Breast epithelium (tissue), 4 donors: ENCODE measurements at regions of chr19 and their contacts with region 1.

Region 1: DNA sequence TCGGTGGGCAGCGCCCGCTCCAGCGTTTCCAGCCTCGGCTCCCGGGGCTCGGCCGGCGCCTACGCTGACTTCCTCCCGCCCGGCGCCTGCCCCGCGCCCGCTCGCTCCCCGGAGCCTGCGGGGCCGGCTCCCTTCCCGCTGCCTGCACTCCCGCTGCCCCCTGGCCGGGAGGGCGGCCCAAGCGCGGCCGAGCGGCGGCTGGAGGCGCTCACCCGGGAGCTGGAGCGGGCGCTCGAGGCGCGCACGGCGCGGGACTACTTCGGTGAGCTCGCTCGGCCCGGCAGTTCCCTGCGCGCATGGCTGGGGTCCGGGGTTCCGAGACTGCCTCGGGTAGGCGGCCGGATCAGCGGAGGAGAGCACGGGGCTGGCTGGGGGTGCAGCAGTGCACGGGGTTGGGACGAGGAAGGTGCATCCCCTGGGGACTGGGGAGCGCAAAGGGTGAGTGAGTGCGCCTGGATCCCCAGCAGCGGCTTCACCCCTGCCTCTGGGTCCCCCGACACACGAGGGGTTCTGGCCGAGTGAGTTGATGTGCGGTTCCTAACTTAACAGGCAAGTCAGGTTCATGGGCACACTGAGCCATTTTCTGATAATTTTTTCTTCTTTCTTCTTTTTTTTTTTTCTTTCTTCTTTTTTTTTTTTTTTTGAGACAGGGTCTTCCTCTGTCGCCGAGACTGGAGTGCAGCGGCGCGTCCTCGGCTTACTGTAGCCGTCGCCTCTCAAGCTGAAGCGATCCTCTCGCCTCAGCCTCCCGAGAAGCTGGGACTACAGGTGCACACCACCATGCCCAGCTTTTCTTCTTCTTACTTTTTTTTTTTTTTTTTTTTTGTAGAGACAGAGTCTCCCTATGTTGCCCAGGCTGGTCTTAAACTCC is 1.1 kb downstream of the WTIP start:
- DNase-seq: no peak
- H3K4me3 ChIP-seq: peak overlapping the region; percentile 62 to 90 (median 72)
- H3K27ac ChIP-seq: peak overlapping the region; percentile 57 to 91
- H3K4me1 ChIP-seq: peaks cover 0 to 6% of the 10 kb centered on the region in 2 donors
- H3K27me3 ChIP-seq: no peaks in the 10 kb centered on the region
- CTCF ChIP-seq: no peak
- POLR2A ChIP-seq: no peak

Region 2: GRCh38 chr19:32611161-32611560 is 1871.5 kb before region 1 on chr19:
- intact Hi-C with region 1: no loop called
- DNase-seq: no peak
- H3K4me3 ChIP-seq: no peak overlapping the region
- H3K27ac ChIP-seq: no peak overlapping the region
- H3K4me1 ChIP-seq: no peaks in the 10 kb centered on the region
- H3K27me3 ChIP-seq: no peaks in the 10 kb centered on the region
- CTCF ChIP-seq: no peak
- POLR2A ChIP-seq: no peak

Region 3: DNA sequence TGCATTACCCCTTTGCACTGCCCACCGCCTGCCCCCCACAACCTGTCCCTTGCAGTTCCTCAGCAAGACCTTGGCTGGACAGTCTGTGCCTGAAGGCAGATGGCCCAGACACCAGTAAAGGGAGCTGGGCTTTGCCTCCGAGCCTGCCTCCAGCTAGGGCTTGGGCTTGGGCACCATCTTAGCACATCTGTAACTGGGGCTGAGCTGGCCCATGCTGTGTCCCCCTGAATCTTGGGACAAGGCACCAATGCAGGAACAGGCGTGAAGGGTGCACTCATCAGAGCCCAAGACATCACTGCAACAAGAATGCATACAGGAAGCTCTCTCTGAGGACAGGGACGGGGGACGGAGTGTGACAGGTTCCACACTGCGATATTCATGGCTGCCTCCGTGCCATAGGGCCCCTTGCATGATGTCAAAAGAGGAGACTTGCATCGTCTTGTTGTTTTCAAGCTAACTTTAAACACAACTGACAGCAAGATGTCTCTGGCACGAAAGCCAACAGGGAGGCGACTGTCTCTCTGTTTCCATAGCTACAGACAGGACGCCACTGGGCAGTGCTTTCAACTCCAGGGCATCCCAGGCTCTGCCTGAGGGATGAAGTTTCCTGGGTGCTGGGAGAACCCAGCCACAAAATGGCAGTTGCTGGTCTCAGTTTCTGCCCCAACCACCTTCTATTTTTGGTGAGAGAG is 869.5 kb before region 1 on chr19:
- intact Hi-C with region 1: no loop called
- DNase-seq: no peak
- H3K4me3 ChIP-seq: no peak overlapping the region
- H3K27ac ChIP-seq: no peak overlapping the region
- H3K4me1 ChIP-seq: no peaks in the 10 kb centered on the region
- H3K27me3 ChIP-seq: peaks cover 0 to 27% of the 10 kb centered on the region in 2 donors
- CTCF ChIP-seq: no peak
- POLR2A ChIP-seq: no peak

Region 4: GRCh38 chr19:34461375-34462100 is 21.1 kb before region 1 on chr19:
- intact Hi-C with region 1: loop called (anchors 2 kb)
- DNase-seq: no peak
- H3K4me3 ChIP-seq: no peak overlapping the region
- H3K27ac ChIP-seq: peak overlapping the region in 1 of 2 donors; percentile 70
- H3K4me1 ChIP-seq: peaks cover 0 to 3% of the 10 kb centered on the region in 2 donors
- H3K27me3 ChIP-seq: no peaks in the 10 kb centered on the region
- CTCF ChIP-seq: no peak
- POLR2A ChIP-seq: no peak

Region 5: DNA sequence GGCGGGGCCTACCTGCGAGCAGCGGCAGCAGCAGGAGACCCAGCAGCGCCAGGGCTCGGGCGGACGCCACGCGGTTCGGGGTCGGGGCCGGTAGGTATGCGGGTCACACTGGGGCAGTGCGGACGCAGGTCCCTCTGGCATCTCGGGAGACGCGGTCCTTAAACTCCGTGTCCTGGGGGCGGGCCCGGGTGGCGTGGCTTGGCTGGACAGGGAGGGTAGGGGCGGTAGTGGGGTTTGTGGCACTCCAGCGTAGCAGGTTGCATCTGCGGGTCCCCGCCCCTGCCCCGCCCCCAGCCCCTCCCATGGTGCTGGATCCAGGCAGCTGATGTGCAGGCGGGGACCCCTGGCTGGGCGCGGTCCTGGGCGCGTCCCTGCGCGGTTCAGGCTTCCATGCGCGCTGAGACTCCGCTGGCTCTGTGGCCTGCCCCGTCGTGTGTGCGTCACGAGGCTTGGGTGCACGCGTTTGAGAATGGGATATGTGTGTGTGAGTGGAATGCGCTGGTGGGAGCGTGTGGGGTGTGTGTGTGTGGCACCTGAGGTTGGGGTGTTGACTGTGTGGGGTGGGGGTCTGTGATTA is 95.0 kb after region 1 on chr19:
- intact Hi-C with region 1: no loop called
- DNase-seq: no peak
- H3K4me3 ChIP-seq: no peak overlapping the region
- H3K27ac ChIP-seq: no peak overlapping the region
- H3K4me1 ChIP-seq: no peaks in the 10 kb centered on the region
- H3K27me3 ChIP-seq: no peaks in the 10 kb centered on the region
- CTCF ChIP-seq: no peak
- POLR2A ChIP-seq: no peak

Region 6: GRCh38 chr19:36060430-36060829 is 1577.8 kb after region 1 on chr19:
- intact Hi-C with region 1: no loop called
- DNase-seq: no peak
- H3K4me3 ChIP-seq: no peak overlapping the region
- H3K27ac ChIP-seq: no peak overlapping the region
- H3K4me1 ChIP-seq: peaks cover 3 to 4% of the 10 kb centered on the region in 2 donors
- H3K27me3 ChIP-seq: no peaks in the 10 kb centered on the region
- CTCF ChIP-seq: peak in 2 of 3 donors; percentile 34 to 52
- POLR2A ChIP-seq: no peak